ENCODE measurements at regions of chr3 and their contacts with region 1.

Region 1: DNA sequence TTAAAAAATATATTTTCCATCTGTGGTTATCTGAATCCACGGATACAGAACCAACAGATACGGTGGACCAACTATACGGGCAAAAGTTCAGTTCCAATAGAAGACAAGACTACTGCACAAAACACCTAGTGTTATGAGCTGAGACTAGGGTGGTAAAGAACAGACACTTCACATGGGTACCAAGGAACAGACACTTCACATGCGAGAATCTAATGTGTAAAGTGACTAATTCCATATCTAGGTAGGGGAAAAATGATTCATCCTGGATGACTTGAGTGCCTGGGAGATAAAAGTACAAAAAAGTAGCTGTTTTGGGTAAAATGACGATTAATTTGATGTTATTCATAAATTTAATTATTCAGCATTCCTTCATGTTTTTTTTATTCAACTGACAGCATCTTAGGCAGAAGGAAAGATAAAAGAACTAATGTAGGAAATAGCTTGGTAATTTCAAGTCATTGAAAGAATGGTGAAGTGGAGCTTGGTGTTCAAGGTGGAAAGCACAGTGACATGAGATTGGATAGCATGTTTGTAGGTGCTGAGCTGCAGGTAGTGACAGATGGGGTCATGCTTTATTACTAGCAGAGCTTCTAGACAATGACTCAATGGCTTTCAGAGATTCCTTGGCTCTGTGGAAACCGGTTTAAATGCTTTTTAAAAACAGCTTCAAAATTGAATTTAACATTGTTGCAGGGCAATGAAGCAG is 5.2 kb downstream of the CD200 start:
- DNase-seq: peak; percentile 33
- H3K4me3 Mint-ChIP-seq: peak overlapping the region; percentile 33
- H3K27ac Mint-ChIP-seq: peak overlapping the region; percentile 87
- H3K4me1 Mint-ChIP-seq: peaks cover 66% of the 10 kb centered on the region
- H3K27me3 Mint-ChIP-seq: no peaks in the 10 kb centered on the region

Region 2: DNA sequence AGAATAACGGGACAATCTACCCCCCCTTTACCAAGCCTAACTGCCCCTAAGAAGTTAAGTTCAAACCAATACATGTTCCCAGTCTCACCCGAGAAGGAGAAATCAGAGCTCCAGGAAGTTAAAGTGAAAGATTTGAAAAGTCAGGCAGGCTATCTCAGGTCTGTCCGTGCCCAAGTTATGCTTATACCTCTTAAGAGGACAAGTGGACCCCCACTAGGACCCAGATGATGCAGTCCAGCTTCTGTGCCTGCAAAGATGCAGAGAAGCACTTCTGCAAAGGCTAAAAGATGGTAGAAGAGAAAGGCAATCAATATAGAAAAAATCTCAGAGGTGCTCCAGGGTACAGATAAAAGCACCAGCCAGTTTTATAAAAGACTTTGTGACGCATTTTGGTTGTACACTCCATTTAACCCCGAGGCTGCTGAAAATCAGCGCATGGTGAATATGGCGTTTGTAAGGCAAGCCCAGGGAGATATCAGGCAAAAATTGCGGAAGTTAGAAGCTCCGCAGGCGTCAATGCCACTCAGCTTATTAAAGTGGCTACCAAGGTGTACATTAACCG is 34.3 kb before region 1 on chr3:
- CTCF ChIA-PET with region 1: interaction called, 8 read pairs
- intact Hi-C with region 1: loop called (anchors 1 kb)
- DNase-seq: peak; percentile 52
- H3K4me3 Mint-ChIP-seq: no peak overlapping the region
- H3K27ac Mint-ChIP-seq: no peak overlapping the region
- H3K4me1 Mint-ChIP-seq: no peaks in the 10 kb centered on the region
- H3K27me3 Mint-ChIP-seq: no peaks in the 10 kb centered on the region

Region 3: GRCh38 chr3:112357930-112358780 is 20.0 kb after region 1 on chr3:
- CTCF ChIA-PET with region 1: interaction called, 4 read pairs
- intact Hi-C with region 1: loop called (anchors 1 kb)
- DNase-seq: peak; percentile 68
- H3K4me3 Mint-ChIP-seq: peak overlapping the region; percentile 58
- H3K27ac Mint-ChIP-seq: peak overlapping the region; percentile 87
- H3K4me1 Mint-ChIP-seq: peaks cover 43% of the 10 kb centered on the region
- H3K27me3 Mint-ChIP-seq: no peaks in the 10 kb centered on the region

Region 4: GRCh38 chr3:112425858-112426750 is 87.9 kb after region 1 on chr3:
- CTCF ChIA-PET with region 1: no interaction called
- intact Hi-C with region 1: no loop called
- DNase-seq: no peak
- H3K4me3 Mint-ChIP-seq: no peak overlapping the region
- H3K27ac Mint-ChIP-seq: no peak overlapping the region
- H3K4me1 Mint-ChIP-seq: peaks cover 4% of the 10 kb centered on the region
- H3K27me3 Mint-ChIP-seq: no peaks in the 10 kb centered on the region

Region 5: DNA sequence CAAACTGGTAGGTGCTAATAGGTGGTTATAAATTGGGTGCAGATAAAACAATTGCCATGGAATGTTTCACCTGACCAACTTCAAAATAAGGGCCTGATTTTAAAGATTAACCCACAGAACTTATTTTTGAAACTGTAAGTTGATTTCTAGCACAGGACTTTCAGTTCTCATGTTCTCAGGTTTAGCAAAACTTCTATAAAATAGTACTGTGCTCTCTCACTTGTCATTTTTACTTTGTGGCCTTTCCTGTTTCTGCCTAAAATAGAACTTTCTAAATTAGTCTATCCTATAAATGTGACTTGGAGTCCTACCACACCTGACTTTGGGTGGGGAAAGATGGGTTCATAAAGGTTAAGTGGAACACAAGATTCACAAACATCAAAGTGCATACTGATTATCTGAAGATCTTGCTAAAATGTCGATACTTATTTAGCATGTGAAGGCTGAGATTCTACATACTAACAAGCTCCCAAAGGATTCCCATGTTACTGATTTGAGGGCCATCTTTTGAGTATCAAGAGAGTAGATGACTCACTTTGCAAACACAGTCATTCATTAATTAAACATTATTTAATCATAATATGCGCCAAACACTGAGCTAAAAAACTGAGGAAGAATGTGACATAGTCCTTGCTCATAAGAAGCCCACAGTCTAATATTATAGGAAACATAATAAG is 122.5 kb after region 1 on chr3:
- CTCF ChIA-PET with region 1: interaction called, 3 read pairs
- intact Hi-C with region 1: loop called (anchors 1 kb)
- DNase-seq: no peak
- H3K4me3 Mint-ChIP-seq: no peak overlapping the region
- H3K27ac Mint-ChIP-seq: peak overlapping the region; percentile 79
- H3K4me1 Mint-ChIP-seq: peaks cover 60% of the 10 kb centered on the region
- H3K27me3 Mint-ChIP-seq: no peaks in the 10 kb centered on the region

Region 6: GRCh38 chr3:112498914-112499711 is 160.9 kb after region 1 on chr3 and contains the start of gene BTLA:
- CTCF ChIA-PET with region 1: interaction called, 33 read pairs
- intact Hi-C with region 1: loop called (anchors 1 kb)
- DNase-seq: peak; percentile 71
- H3K4me3 Mint-ChIP-seq: peak within 1 kb of the TSS; percentile 100
- H3K27ac Mint-ChIP-seq: peak within 1 kb of the TSS; percentile 100
- H3K4me1 Mint-ChIP-seq: peaks cover 51% of the 10 kb centered on the region
- H3K27me3 Mint-ChIP-seq: no peaks in the 10 kb centered on the region
- total RNA-seq, gene BTLA: 70.6 to 73.4 TPM

Measured in activated naive CD4-positive, alpha-beta T cell treated with anti-CD3 and anti-CD28 coated beads for 36 hours (primary cell).